ENCODE measurements at regions of chr9 and their contacts with region 1.

Region 1: GRCh38 chr9:107489687-107490605 is at the start of gene KLF4:
- DNase-seq: peak; percentile 90 to 92
- H3K4me3 ChIP-seq: peak within 1 kb of the TSS; percentile 75
- H3K4me3 Mint-ChIP-seq: peak within 1 kb of the TSS; percentile 79
- H3K27ac Mint-ChIP-seq: peak within 1 kb of the TSS; percentile 87
- H3K4me1 ChIP-seq: peaks cover 12% of the 10 kb centered on the region
- H3K4me1 Mint-ChIP-seq: peaks cover 7% of the 10 kb centered on the region
- H3K27me3 ChIP-seq: no peaks in the 10 kb centered on the region
- H3K27me3 Mint-ChIP-seq: peaks cover under 1% of the 10 kb centered on the region
- CTCF ChIP-seq: no peak
- total RNA-seq, gene KLF4: 4.9 and 7.2 TPM in 2 replicates

Region 2: GRCh38 chr9:107518037-107518807 is 28.3 kb after region 1 on chr9:
- CTCF ChIA-PET with region 1: no interaction called
- POLR2A ChIA-PET with region 1: no interaction called
- intact Hi-C with region 1: no loop called
- DNase-seq: no peak
- H3K4me3 ChIP-seq: no peak overlapping the region
- H3K4me3 Mint-ChIP-seq: no peak overlapping the region
- H3K27ac Mint-ChIP-seq: no peak overlapping the region
- H3K4me1 ChIP-seq: no peaks in the 10 kb centered on the region
- H3K4me1 Mint-ChIP-seq: no peaks in the 10 kb centered on the region
- H3K27me3 ChIP-seq: no peaks in the 10 kb centered on the region; the same call in 1 of the 2 replicates
- H3K27me3 Mint-ChIP-seq: no peaks in the 10 kb centered on the region
- CTCF ChIP-seq: no peak

Region 3: DNA sequence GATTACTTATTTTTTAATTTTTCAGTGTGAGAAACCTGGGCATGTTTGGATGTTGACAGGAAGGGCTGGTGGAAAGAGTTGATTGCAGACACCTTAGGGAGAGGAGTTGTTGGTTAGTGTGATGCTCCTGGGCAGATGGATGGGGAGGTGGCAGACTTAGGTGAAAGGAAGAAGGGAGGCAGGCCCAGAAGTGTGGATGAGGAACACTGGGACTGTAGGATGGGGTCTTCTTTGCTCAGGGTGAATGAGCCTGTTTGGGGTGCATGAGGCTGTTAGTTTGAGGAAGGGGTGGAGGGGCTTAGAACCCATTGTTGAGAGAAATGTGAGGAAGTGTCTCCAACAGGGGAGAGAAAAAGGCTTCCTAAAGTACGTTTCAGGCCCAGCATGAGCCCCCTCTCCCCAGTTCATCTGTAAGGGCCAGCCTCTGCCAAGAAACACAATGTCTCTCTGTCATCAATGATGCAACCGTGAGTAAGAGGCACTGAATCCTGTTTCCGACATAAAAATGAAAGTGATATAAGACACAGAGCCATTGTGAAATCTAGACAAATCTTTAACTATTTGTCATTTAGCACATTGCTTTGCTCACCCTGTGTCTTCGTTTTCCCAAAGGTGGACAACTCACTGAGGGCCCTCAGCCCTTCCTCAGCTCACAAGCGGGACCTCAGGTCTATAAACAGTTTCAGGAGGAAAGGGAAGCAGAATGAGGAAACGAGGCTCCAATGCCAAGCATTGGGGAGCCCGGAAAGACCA is 58.3 kb after region 1 on chr9:
- CTCF ChIA-PET with region 1: no interaction called
- POLR2A ChIA-PET with region 1: no interaction called
- intact Hi-C with region 1: loop called (anchors 5 kb)
- DNase-seq: peak in 1 of 2 experiments; percentile 35
- H3K4me3 ChIP-seq: no peak overlapping the region
- H3K4me3 Mint-ChIP-seq: no peak overlapping the region
- H3K27ac Mint-ChIP-seq: peak overlapping the region; percentile 56
- H3K4me1 ChIP-seq: peaks cover 21% of the 10 kb centered on the region
- H3K4me1 Mint-ChIP-seq: peaks cover 33% of the 10 kb centered on the region
- H3K27me3 ChIP-seq: no peaks in the 10 kb centered on the region
- H3K27me3 Mint-ChIP-seq: no peaks in the 10 kb centered on the region
- CTCF ChIP-seq: no peak

Region 4: GRCh38 chr9:107858260-107858659 is 368.3 kb after region 1 on chr9:
- CTCF ChIA-PET with region 1: no interaction called
- POLR2A ChIA-PET with region 1: interaction called, 12 read pairs
- intact Hi-C with region 1: no loop called
- DNase-seq: no peak
- H3K4me3 ChIP-seq: no peak overlapping the region
- H3K4me3 Mint-ChIP-seq: no peak overlapping the region
- H3K27ac Mint-ChIP-seq: no peak overlapping the region
- H3K4me1 ChIP-seq: no peaks in the 10 kb centered on the region
- H3K4me1 Mint-ChIP-seq: no peaks in the 10 kb centered on the region
- H3K27me3 ChIP-seq: no peaks in the 10 kb centered on the region
- H3K27me3 Mint-ChIP-seq: no peaks in the 10 kb centered on the region
- CTCF ChIP-seq: no peak

Region 5: GRCh38 chr9:108412755-108413154 is 922.8 kb after region 1 on chr9:
- CTCF ChIA-PET with region 1: interaction called, 4 read pairs
- POLR2A ChIA-PET with region 1: no interaction called
- intact Hi-C with region 1: loop called (anchors 10 kb)
- DNase-seq: peak; percentile 36 to 51
- H3K4me3 ChIP-seq: no peak overlapping the region
- H3K4me3 Mint-ChIP-seq: no peak overlapping the region
- H3K27ac Mint-ChIP-seq: no peak overlapping the region
- H3K4me1 ChIP-seq: no peaks in the 10 kb centered on the region
- H3K4me1 Mint-ChIP-seq: no peaks in the 10 kb centered on the region
- H3K27me3 ChIP-seq: no peaks in the 10 kb centered on the region
- H3K27me3 Mint-ChIP-seq: no peaks in the 10 kb centered on the region
- CTCF ChIP-seq: no peak